B cell (primary cell): ENCODE measurements at regions of chr5 and their contacts with region 1.

Region 1: DNA sequence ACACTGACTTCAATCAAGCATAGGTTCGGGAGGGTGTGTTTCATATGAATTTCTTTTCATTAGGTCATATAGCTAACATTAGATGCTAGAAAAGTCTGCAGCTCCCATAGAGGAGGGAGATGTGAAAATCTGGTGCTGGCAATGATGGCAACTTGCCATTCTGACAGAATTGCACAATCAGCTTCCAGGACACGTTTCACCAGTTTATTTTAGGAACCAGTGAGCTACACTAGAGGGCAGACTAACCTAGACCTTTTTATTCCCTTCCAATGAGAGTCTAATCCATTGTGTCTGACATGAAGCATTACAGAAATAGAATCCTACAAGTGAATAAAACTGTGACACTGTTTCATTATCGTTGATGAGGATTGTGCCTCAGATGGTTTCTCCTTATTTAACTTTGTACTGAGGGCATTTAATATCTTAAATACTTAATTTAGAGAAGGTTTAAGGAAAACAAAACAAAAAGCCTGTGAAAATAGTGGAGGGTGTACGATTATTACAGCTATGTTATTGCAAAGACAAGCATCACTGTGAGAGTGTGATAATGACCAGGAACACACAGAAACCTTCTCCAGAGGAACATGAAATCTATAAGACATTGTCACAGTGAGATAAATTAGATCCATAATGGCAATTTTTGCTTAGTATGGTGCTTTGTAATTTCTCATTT is 363.3 kb upstream of the RPS23 start:
- DNase-seq: peak; percentile 12
- ATAC-seq: no peak
- H3K4me3 ChIP-seq: no peak overlapping the region
- H3K4me3 Mint-ChIP-seq: no peak overlapping the region
- H3K27ac ChIP-seq: no peak overlapping the region
- H3K27ac Mint-ChIP-seq: no peak overlapping the region
- H3K4me1 ChIP-seq: no peaks in the 10 kb centered on the region
- H3K4me1 Mint-ChIP-seq: no peaks in the 10 kb centered on the region
- H3K27me3 ChIP-seq: no peaks in the 10 kb centered on the region
- H3K27me3 Mint-ChIP-seq: no peaks in the 10 kb centered on the region
- CTCF ChIP-seq: peak; percentile 55

Region 2: GRCh38 chr5:82605441-82605973 is 36.0 kb before region 1 on chr5:
- CTCF ChIA-PET with region 1: no interaction called
- POLR2A ChIA-PET with region 1: no interaction called
- intact Hi-C with region 1: no loop called
- DNase-seq: no peak
- ATAC-seq: no peak
- H3K4me3 ChIP-seq: no peak overlapping the region
- H3K4me3 Mint-ChIP-seq: no peak overlapping the region
- H3K27ac ChIP-seq: no peak overlapping the region
- H3K27ac Mint-ChIP-seq: no peak overlapping the region
- H3K4me1 ChIP-seq: no peaks in the 10 kb centered on the region
- H3K4me1 Mint-ChIP-seq: no peaks in the 10 kb centered on the region
- H3K27me3 ChIP-seq: no peaks in the 10 kb centered on the region
- H3K27me3 Mint-ChIP-seq: no peaks in the 10 kb centered on the region
- CTCF ChIP-seq: no peak

Region 3: DNA sequence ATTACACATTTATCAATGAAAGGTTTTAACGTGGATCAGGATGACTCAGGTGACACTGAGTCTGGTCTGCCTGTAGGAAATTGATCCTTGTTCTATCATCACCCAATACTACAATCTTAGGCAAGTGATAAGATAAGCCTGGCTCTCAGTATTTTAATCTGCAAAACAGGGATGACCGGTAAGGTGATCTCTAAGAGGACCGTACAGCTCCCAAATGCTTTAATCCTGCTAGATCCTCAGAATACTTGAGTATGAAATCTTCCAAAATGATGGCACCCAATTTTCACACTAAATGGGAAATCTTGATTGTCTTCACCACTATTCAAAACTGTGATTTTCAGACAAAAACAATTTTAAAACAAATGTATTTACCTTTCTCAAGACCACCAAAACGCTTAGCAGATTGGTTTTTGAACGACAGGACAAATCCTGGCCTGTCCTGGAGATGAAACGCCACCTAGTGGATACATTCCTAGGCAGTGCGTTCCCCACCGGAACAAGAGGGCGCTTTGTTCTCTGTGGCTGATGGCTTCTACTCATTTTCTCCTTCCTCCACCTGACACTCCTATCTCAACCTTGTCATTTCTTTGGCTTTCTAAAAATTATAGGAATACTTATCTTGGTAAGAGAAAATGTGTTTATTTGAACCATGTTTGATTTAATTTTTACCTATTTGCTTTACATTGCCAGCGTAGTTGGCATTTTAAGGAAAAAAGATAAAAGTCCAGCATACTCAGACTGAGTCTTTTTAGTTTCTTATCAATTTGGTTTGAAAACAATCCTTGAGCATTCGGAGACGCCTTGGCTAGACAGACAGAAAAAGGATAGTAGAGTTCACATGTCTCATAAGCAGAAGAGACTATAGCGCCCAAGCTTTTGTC is 788.9 kb after region 1 on chr5:
- CTCF ChIA-PET with region 1: interaction called, 9 read pairs
- POLR2A ChIA-PET with region 1: no interaction called
- intact Hi-C with region 1: loop called (anchors 1 kb)
- DNase-seq: peak; percentile 42
- ATAC-seq: no peak
- H3K4me3 ChIP-seq: no peak overlapping the region
- H3K4me3 Mint-ChIP-seq: no peak overlapping the region
- H3K27ac ChIP-seq: no peak overlapping the region
- H3K27ac Mint-ChIP-seq: no peak overlapping the region
- H3K4me1 ChIP-seq: no peaks in the 10 kb centered on the region
- H3K4me1 Mint-ChIP-seq: no peaks in the 10 kb centered on the region
- H3K27me3 ChIP-seq: no peaks in the 10 kb centered on the region
- H3K27me3 Mint-ChIP-seq: no peaks in the 10 kb centered on the region
- CTCF ChIP-seq: peak; percentile 74

Region 4: DNA sequence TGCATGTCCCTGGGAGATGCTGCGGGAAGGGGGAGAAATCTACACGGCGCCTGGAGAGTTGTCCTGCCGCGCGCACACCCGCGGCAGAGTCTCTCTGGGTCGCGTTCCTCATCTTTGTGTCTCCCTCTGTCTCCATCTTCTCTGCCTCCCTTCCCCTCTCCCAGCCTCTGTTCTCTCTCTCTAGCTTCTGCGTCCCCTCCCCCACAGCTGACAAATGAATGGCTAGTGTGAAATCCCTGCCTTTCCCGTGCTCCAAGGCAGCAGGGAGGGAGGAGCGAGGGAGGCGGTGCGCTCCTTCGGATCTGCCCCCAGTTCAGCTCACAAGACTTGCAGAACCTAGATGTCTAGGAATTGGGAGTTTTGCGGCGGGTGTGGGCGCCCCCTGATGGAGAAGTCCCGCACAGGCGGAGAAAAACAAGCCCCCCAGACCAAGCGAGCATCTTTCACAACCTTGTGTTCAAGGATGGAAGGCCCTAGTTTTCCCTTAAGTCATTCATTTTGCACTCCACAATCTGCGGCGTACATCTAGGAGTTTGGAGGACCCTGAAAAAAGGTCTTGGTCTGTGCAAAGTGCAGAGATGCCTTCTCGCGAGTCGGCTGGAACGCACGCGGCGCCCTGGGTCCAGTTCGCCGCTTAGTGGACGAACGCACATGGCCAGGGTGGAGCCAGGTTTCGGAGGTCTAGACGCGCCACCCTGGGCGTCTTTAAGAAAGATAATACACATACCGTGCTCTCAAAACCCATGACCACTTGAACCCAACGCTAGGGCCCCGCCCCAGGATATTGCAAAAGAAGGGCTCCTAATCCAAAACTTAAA is 832.1 kb after region 1 on chr5:
- CTCF ChIA-PET with region 1: no interaction called
- POLR2A ChIA-PET with region 1: no interaction called
- intact Hi-C with region 1: loop called (anchors 5 kb)
- DNase-seq: peak; percentile 28
- ATAC-seq: peak; percentile 31
- H3K4me3 ChIP-seq: peak overlapping the region; percentile 2 to 72 (median 40)
- H3K4me3 Mint-ChIP-seq: peak overlapping the region; percentile 79
- H3K27ac ChIP-seq: no peak overlapping the region
- H3K27ac Mint-ChIP-seq: no peak overlapping the region
- H3K4me1 ChIP-seq: peaks cover 33 to 39% of the 10 kb centered on the region in 2 donors
- H3K4me1 Mint-ChIP-seq: peaks cover 38% of the 10 kb centered on the region
- H3K27me3 ChIP-seq: peaks cover 0 to 43% (median 43%) of the 10 kb centered on the region in 4 experiments
- H3K27me3 Mint-ChIP-seq: peaks cover 69% of the 10 kb centered on the region
- CTCF ChIP-seq: peak; percentile 42